Posterior cingulate gyrus (tissue), 11 donors: ENCODE measurements at regions of chr5 and their contacts with region 1.

Region 1: DNA sequence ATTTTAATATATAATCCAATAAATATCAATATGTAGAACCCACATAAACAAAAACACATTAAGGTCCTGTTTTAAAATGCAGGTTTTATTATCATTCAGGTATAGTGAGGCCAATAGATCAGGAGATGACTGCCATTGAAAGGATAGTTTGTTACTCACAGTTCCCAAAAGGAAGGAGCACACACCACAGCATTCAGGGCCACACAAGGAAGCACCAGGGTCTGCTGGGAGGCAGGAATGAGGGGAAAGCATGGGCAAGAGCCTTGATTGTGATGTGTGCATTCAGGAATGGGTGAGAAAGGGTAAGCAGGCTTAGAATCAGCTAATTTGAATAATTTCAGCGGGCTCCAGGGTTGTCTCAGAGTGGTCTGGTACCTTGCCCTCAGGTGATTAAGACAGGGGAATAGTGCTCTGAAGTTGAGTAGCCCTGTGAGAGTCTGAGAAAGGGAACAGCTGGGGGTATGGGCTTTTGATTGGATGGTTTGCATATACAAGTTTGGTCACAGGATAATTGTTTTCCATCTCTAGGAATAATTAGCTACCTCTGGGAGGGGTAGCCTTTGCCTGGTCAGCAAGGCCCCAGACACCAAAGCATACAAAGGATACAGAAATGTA is 19.8 kb upstream of the OTULIN start:
- DNase-seq: no peak

Region 2: DNA sequence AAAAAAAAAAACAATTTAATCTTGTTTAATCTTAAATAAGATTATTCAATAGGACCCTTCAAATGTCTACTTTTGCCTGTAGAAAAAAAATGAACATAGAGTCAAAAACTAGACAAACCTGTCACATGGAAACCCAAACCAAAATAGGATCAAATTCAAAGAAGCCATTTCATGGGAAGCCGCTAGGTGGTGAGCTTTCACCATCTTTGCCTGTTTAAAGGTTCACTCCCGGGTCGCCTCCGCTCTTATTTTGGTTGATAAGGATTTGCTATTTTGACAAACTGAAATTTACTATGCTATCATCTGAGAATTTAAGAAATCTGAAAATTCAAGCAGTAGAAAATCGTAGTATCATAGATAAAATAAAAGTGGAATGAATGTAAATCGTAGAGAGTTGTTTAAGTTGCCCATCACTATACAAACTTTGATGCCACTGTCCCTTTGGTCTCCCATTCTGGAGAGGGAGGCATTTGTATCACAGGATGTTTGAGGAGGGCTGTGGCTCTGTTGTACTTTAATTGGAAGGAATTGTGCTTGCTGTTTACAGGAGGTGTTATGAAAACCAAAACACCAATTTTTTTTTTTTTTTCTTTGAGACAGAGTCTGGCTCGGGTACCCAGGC is 656.8 kb before region 1 on chr5:
- intact Hi-C with region 1: loop called (anchors 5 kb)
- DNase-seq: peak in 6 of 10 donors; percentile 26 to 87 (median 46)

Region 3: DNA sequence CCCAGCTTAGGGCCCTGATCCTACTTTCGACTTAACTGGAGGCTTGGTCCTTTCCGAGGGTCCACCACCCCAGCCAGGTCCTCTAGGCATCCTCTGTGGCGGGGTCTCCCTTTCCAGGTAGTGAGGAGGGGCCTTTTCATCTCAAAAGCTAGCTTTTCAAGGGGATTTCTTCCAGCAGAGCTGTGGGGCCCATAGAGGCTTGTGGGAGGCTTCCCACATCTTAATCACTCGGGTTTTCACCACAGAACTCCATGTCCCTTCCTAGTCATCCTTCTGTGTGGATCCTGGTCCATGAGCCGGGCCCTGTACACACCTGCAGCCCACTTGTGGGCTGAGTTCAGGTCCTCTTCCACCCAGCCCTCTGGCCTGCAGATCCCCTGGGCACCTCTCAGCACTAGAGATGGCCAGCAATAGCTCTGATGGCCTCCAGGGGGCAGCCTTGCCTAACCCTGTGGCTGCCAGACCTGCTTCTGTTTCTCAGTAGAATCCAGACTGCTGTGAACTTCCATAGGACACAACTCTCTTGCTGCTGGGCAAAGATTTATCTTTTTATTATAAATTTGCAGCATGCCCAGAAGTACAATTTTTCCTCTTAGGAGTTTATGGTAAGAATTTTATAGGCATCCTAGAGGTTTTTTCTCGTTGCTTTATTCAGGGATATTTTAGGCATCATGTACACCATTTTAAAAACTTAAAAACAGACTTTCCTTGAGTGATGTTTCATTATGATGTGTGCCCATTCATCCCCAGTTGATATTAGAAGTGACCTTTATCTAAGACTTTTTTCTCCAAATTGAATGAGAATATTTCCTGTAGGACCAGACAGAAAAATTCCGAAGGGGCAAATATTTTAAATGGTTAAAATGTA is 292.7 kb before region 1 on chr5:
- intact Hi-C with region 1: loop called (anchors 1 kb)
- DNase-seq: peak; percentile 50 to 95 (median 75)

Region 4: DNA sequence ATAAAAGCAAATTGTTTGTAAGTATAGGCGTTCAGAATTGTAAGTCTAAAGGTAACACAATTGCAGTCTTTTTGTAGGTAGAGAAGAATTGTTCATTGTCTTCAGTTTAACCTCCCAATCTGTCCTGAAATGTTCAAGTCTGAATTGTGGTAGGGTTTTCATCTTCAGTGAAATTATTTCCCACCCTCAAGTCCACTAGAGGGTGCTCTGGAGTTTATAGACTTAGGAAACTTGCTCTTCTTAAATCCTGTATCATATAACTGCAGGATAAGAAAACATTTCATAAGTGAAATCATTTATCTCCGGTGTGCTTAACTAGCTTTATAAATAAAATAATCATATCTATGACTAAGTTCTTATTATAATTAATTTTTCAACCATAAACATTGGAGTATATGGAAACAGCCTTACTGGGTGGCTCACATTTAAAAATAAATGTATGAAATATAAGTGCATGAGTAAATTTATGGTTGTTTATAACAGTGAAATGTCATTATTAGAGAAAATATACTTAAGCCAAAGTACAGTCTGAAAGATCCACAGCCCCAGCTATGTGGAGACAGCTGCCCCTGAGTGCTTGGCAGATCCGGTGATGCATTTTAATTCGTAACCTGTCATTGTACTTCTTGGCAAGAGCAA is 245.6 kb before region 1 on chr5:
- intact Hi-C with region 1: loop called (anchors 2 kb)
- DNase-seq: no peak